ENCODE measurements at regions of chr7 and their contacts with region 1.

Region 1: DNA sequence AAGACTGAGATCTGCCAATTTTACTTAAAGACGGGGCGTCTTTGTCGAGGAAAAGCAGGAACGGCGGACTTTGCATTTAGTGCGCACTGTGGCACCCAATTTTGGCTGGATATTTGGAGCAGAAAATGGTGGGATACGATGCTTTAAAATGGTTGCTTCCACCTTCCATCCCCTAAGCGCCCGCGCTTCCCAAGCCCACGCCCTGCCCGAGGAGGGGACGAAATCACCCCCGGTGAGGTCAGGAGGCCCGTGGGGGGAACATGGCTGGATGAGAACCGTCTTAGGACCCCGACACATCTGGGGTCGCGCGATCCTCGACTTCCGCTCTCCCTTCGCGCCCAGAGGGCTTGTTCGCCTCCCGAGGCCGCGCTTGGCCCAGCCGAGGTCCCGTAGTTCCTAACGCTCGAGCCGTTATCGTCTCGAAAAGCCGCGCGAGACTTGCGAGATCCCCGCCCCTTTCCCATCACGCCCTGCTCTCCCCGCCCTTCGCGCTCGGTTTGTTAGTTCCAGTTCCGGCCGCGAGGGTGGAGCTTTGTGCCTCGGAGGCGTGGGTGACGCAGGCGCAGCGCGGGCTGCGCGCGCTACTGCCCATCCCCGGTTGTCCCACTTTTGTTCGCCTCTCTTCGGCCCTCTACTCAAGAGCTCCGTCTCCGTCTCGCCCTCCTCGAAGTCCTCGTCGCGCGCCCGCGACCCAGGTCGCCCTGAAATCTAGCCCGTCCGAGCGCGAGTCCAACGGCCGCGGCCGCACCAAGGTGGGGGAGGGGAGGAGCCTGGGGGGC is at the start of gene SRRT:
- DNase-seq: peak; percentile 99
- H3K4me3 ChIP-seq: peak within 1 kb of the TSS; percentile 91 to 99 (median 95)
- H3K27ac ChIP-seq: peak within 1 kb of the TSS; percentile 93 to 97 (median 96)
- H3K4me1 ChIP-seq: peaks cover 0 to 41% (median 32%) of the 10 kb centered on the region in 4 donors
- H3K27me3 ChIP-seq: no peaks in the 10 kb centered on the region
- CTCF ChIP-seq: peak; percentile 58 to 86 (median 69)
- EP300 ChIP-seq: peak in 1 of 4 donors; percentile 78
- POLR2A ChIP-seq: peak; percentile 97 to 98
- total RNA-seq, gene SRRT: 42.1 to 64.3 (median 51.4) TPM

Region 2: GRCh38 chr7:100611974-100612729 is 262.6 kb before region 1 on chr7 and contains the start of gene MOSPD3:
- intact Hi-C with region 1: loop called (anchors 10 kb)
- DNase-seq: peak; percentile 100
- H3K4me3 ChIP-seq: peak within 1 kb of the TSS; percentile 57 to 91 (median 79)
- H3K27ac ChIP-seq: peak within 1 kb of the TSS; percentile 92 to 97 (median 94)
- H3K4me1 ChIP-seq: peaks cover 0 to 16% (median 13%) of the 10 kb centered on the region in 4 donors
- H3K27me3 ChIP-seq: no peaks in the 10 kb centered on the region
- CTCF ChIP-seq: peak in 1 of 4 experiments; percentile 10
- EP300 ChIP-seq: peak in 1 of 4 donors; percentile 5
- POLR2A ChIP-seq: peak; percentile 76 to 84
- total RNA-seq, gene MOSPD3: 8.0 to 16.4 (median 12.0) TPM

Region 3: GRCh38 chr7:100894860-100895421 is 20.2 kb after region 1 on chr7:
- intact Hi-C with region 1: no loop called
- DNase-seq: peak; percentile 76
- H3K4me3 ChIP-seq: peak overlapping the region; percentile 18 to 50 (median 38)
- H3K27ac ChIP-seq: peak overlapping the region in 1 of 4 donors; percentile 1
- H3K4me1 ChIP-seq: peaks cover 0 to 45% (median 42%) of the 10 kb centered on the region in 4 donors
- H3K27me3 ChIP-seq: peaks cover 27 to 57% (median 42%) of the 10 kb centered on the region in 3 donors
- CTCF ChIP-seq: peak; percentile 54 to 78 (median 72)
- EP300 ChIP-seq: no peak
- POLR2A ChIP-seq: no peak

Measured in sigmoid colon (tissue), 7 donors.